Right ventricle myocardium inferior (tissue), 1 donor: ENCODE measurements at regions of chr5 and their contacts with region 1.

Region 1: DNA sequence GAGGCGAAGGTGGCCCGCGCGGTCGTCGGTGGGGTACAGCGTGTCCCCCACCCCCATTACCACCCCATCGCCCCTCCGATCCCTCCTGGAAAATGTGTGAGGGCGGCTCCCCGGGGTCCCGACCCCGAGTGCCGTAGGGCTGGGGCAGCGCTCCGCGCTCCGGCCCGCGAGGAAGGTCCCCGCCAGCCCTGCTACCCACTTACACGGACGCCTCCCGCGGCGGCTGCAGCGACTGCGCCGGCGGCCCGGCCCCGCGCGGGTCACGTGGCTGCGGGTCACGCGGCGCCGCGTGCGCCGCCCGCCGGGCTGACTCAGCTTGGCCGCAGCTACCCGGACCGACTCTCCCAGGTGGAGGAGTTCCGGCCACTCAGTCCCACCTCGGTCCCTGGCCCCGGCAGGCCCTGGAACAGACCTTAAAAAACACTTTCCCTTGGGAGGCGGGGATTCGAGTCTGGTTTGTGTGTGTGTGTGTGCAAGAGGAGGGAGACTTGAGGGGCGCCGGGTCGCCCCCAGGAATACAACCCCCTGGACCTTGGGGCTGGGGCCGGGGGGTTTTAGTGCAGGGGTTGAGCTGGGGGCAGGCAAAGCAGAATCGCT is at the start of gene GNPDA1:
- DNase-seq: peak; percentile 93
- ATAC-seq: peak; percentile 92
- total RNA-seq, gene GNPDA1: 25.2 TPM

Region 2: GRCh38 chr5:141992349-141992963 is 20.4 kb before region 1 on chr5:
- intact Hi-C with region 1: loop called (anchors 1 kb)
- DNase-seq: no peak
- ATAC-seq: peak; percentile 64

Region 3: GRCh38 chr5:142063878-142064331 is 51.0 kb after region 1 on chr5:
- intact Hi-C with region 1: loop called (anchors 5 kb)
- DNase-seq: peak; percentile 84
- ATAC-seq: peak; percentile 86

Region 4: GRCh38 chr5:142108432-142109330 is 95.8 kb after region 1 on chr5 and contains the start of gene NDFIP1:
- intact Hi-C with region 1: loop called (anchors 5 kb)
- DNase-seq: peak; percentile 95
- ATAC-seq: peak; percentile 98
- total RNA-seq, gene NDFIP1: 51.9 TPM

Region 5: GRCh38 chr5:142145106-142145900 is 132.4 kb after region 1 on chr5:
- intact Hi-C with region 1: loop called (anchors 1 kb)
- DNase-seq: no peak
- ATAC-seq: peak; percentile 91

Region 6: GRCh38 chr5:142699184-142699720 is 686.4 kb after region 1 on chr5:
- intact Hi-C with region 1: loop called (anchors 10 kb)
- DNase-seq: peak; percentile 89
- ATAC-seq: peak; percentile 90